Mammary epithelial cell (primary cell): ENCODE measurements at regions of chr1 and their contacts with region 1.

Region 1: GRCh38 chr1:159996653-159997052 is 35.1 kb downstream of the PIGM start:
- DNase-seq: peak; percentile 83
- H3K4me3 ChIP-seq: no peak overlapping the region
- H3K27ac ChIP-seq: no peak overlapping the region
- H3K4me1 ChIP-seq: peaks cover 16% of the 10 kb centered on the region
- H3K27me3 ChIP-seq: no peaks in the 10 kb centered on the region
- CTCF ChIP-seq: no peak

Region 2: GRCh38 chr1:159646687-159647086 is 350.0 kb before region 1 on chr1:
- CTCF ChIA-PET with region 1: no interaction called
- dilution Hi-C with region 1: no loop called
- in situ Hi-C with region 1: no loop called
- intact Hi-C with region 1: no loop called
- DNase-seq: no peak
- H3K4me3 ChIP-seq: no peak overlapping the region
- H3K27ac ChIP-seq: no peak overlapping the region
- H3K4me1 ChIP-seq: no peaks in the 10 kb centered on the region
- H3K27me3 ChIP-seq: no peaks in the 10 kb centered on the region
- CTCF ChIP-seq: no peak

Region 3: DNA sequence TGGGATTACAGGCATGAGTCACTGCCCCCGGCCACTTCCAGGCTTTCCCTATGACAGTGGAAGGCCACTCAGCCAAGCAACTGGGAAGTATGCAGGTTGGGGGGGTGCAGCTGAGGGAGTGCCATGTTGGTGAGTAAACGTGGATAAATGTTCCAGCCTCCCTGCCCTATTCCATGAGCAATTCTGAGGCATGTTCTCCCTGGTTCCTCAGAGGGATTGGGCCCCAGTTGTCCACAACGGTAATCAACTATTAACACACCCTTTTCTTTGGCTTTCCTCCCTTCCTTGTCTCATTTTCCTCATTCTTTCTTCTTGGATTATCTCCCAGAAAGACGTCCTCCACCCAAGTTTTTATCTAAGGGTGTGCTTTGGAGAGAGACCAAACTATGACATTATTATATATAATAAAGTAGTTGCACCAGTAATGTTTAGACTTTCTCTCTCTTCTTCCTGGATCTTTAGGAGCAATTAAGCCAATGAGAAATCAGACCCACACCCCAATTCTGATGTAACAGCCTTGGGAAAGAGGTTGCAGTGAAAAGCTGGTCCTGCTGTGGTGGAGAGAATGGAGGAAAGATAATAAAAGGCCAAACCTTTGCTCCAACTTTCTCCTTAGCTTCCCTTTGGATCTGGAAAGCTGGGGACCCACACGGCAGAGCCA is 35.8 kb before region 1 on chr1:
- CTCF ChIA-PET with region 1: no interaction called
- dilution Hi-C with region 1: no loop called
- in situ Hi-C with region 1: no loop called
- intact Hi-C with region 1: loop called (anchors 5 kb)
- DNase-seq: peak; percentile 81
- H3K4me3 ChIP-seq: peak overlapping the region in 1 of 3 experiments; percentile 17
- H3K27ac ChIP-seq: peak overlapping the region; percentile 71
- H3K4me1 ChIP-seq: peaks cover 22% of the 10 kb centered on the region
- H3K27me3 ChIP-seq: no peaks in the 10 kb centered on the region
- CTCF ChIP-seq: no peak

Region 4: GRCh38 chr1:160046494-160047110 is 49.9 kb after region 1 on chr1:
- CTCF ChIA-PET with region 1: no interaction called
- dilution Hi-C with region 1: no loop called
- in situ Hi-C with region 1: no loop called
- intact Hi-C with region 1: no loop called
- DNase-seq: peak; percentile 29
- H3K4me3 ChIP-seq: no peak overlapping the region
- H3K27ac ChIP-seq: no peak overlapping the region
- H3K4me1 ChIP-seq: no peaks in the 10 kb centered on the region
- H3K27me3 ChIP-seq: no peaks in the 10 kb centered on the region
- CTCF ChIP-seq: peak; percentile 41 to 73